A549 (cell line): ENCODE measurements at regions of chr20 and their contacts with region 1.

Region 1: GRCh38 chr20:17648791-17649730 is 33.0 kb downstream of the RRBP1 start:
- DNase-seq: peak; percentile 26 to 62
- ATAC-seq: peak; percentile 51 to 74; a peak in 3 of 6 replicates
- H3K4me3 ChIP-seq: no peak overlapping the region
- H3K27ac ChIP-seq: no peak overlapping the region
- H3K4me1 ChIP-seq: peaks cover 20% of the 10 kb centered on the region
- CTCF ChIP-seq: peak; percentile 50
- EP300 ChIP-seq: no peak
- POLR2A ChIP-seq: no peak
- RAD21 ChIP-seq: peak; percentile 32 to 34; a peak in 3 of 5 replicates

Region 2: GRCh38 chr20:17636523-17637412 is 12.3 kb before region 1 on chr20:
- CTCF ChIA-PET with region 1: interaction called, 25 read pairs
- POLR2A ChIA-PET with region 1: no interaction called
- DNase-seq: no peak
- ATAC-seq: peak in 1 of 2 experiments; percentile 32; a peak in 3 of 6 replicates
- H3K4me3 ChIP-seq: no peak overlapping the region
- H3K27ac ChIP-seq: no peak overlapping the region
- H3K4me1 ChIP-seq: no peaks in the 10 kb centered on the region
- CTCF ChIP-seq: no peak
- EP300 ChIP-seq: no peak
- POLR2A ChIP-seq: no peak
- RAD21 ChIP-seq: no peak

Region 3: GRCh38 chr20:17666481-17666880 is 17.4 kb after region 1 on chr20:
- CTCF ChIA-PET with region 1: interaction called, 11 read pairs
- POLR2A ChIA-PET with region 1: no interaction called
- DNase-seq: no peak
- ATAC-seq: no peak
- H3K4me3 ChIP-seq: no peak overlapping the region
- H3K27ac ChIP-seq: no peak overlapping the region
- H3K4me1 ChIP-seq: peaks cover 12% of the 10 kb centered on the region
- CTCF ChIP-seq: no peak
- EP300 ChIP-seq: no peak
- POLR2A ChIP-seq: no peak
- RAD21 ChIP-seq: no peak

Region 4: DNA sequence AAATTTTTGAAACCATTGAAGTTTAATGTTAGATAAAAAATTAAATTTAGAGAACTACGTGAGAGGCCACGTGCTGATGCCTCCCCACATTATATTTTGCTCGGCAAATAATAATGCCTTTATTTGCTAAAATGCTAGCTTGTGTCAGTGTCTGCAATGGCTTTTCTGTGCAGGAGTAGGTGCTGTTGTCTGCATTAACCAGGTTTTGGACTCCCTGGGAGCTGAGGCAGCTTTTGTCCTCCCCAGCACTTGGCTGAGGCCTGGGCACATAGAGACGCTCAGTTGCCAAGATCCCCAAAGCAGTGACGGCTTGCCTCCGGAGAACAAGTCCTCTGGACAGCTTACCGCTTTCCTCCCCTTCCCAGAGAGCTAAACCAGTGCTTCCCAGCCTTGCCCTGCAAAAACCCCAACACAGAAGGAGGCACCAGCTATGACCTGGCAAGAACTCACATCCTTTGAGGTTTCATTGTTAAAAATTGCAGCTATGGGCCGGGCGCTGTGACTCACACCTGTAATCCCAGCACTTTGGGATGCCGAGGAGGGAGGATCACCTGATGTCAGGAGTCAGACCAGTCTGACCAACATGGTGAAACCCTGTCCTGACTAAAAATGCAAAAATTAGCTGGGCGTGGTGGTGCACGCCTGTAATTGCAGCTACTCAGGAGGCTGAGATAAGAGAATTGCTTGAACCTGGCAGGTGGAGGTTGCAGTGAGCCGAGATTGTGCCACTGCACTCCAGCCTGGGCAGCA is 548.5 kb after region 1 on chr20:
- CTCF ChIA-PET with region 1: no interaction called
- POLR2A ChIA-PET with region 1: no interaction called
- DNase-seq: no peak
- ATAC-seq: no peak
- H3K4me3 ChIP-seq: no peak overlapping the region
- H3K27ac ChIP-seq: no peak overlapping the region
- H3K4me1 ChIP-seq: no peaks in the 10 kb centered on the region
- CTCF ChIP-seq: no peak
- EP300 ChIP-seq: no peak
- POLR2A ChIP-seq: no peak
- RAD21 ChIP-seq: no peak